ENCODE measurements at regions of chrX and their contacts with region 1.

Region 1: GRCh38 chrX:40058719-40059118 is 39.0 kb downstream of the BCOR start:
- DNase-seq: no peak
- ATAC-seq: no peak
- H3K4me3 ChIP-seq: no peak overlapping the region
- H3K4me3 Mint-ChIP-seq: no peak overlapping the region
- H3K27ac ChIP-seq: no peak overlapping the region
- H3K27ac Mint-ChIP-seq: no peak overlapping the region
- H3K4me1 ChIP-seq: peaks cover 32% of the 10 kb centered on the region
- H3K4me1 Mint-ChIP-seq: peaks cover 35% of the 10 kb centered on the region
- H3K27me3 ChIP-seq: no peaks in the 10 kb centered on the region
- H3K27me3 Mint-ChIP-seq: no peaks in the 10 kb centered on the region
- CTCF ChIP-seq: no peak

Region 2: DNA sequence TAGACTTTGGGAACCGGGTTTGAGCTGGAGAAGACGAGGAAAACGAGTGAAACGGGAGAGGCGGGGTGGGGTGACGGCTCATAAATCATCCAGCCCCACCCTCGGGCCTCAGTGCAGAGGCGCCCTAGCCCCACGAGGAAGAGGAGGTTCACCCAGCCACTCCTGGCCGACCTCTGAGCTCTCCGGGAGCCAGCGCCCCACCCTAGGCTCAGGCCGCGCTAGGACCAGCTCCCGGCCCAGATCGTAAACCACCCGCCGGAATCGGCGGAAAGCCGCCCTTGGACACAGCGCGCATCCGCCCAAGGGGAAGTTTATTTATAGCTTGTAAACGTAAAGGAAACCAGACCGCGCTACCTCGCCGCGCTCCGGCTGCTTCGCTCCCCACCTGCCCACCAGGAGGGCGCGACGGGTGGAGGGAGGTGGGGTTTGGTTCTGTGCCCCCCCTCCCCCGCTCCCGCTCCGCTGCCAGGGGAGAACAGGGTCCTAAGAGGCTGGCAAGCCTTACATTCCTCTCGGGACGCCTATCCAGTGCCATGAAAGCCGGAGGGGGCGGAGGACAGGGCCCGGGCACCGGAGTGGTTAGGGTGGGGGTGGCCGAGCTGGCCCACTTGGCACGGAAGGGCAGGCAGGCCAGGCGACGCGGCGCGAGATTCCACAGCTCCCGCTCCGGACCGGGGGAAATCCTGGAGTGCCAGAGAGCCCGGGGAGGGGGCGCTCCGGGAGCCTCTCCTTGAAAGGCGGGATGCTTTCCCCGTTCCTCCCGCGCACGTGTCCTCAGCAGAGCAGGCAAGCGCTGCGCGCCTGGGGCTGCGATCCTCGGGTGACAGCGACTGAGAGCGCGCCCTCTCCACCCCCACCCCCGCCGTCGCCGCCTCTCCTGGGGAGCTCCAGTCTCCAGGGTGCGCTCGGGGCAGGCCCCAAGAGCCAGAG is 45.2 kb before region 1 on chrX:
- CTCF ChIA-PET with region 1: no interaction called
- POLR2A ChIA-PET with region 1: no interaction called
- intact Hi-C with region 1: loop called (anchors 2 to 5 kb)
- DNase-seq: peak in 6 of 9 experiments; percentile 18 to 66 (median 46)
- ATAC-seq: peak; percentile 37
- H3K4me3 ChIP-seq: peak overlapping the region; percentile 54 to 57
- H3K4me3 Mint-ChIP-seq: peak overlapping the region; percentile 76
- H3K27ac ChIP-seq: no peak overlapping the region
- H3K27ac Mint-ChIP-seq: no peak overlapping the region
- H3K4me1 ChIP-seq: peaks cover 40% of the 10 kb centered on the region
- H3K4me1 Mint-ChIP-seq: peaks cover 27% of the 10 kb centered on the region
- H3K27me3 ChIP-seq: peaks cover 0 to 3% of the 10 kb centered on the region in 2 experiments
- H3K27me3 Mint-ChIP-seq: peaks cover 2% of the 10 kb centered on the region
- CTCF ChIP-seq: no peak

Region 3: DNA sequence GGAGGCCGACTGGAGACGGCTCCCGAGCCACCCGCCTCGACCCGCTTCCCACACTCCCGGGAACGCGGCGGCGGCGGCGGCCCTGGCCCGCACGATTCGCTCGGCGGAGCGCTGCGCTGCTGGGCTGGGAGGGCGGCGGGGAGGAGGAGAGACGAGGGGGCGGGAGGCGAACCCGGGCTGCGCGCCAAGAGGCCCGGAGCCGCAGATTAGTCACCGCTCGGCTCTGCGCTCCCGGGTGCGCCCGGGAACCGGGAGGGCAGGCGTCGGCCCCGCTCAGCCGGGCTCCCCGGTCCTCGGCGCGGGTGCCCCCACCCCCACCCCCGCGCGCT is 50.2 kb after region 1 on chrX:
- CTCF ChIA-PET with region 1: no interaction called
- POLR2A ChIA-PET with region 1: no interaction called
- intact Hi-C with region 1: no loop called
- DNase-seq: peak; percentile 26 to 85 (median 69)
- ATAC-seq: peak; percentile 57
- H3K4me3 ChIP-seq: peak overlapping the region; percentile 37 to 40
- H3K4me3 Mint-ChIP-seq: peak overlapping the region; percentile 64
- H3K27ac ChIP-seq: no peak overlapping the region
- H3K27ac Mint-ChIP-seq: no peak overlapping the region
- H3K4me1 ChIP-seq: peaks cover 15% of the 10 kb centered on the region
- H3K4me1 Mint-ChIP-seq: peaks cover 13% of the 10 kb centered on the region
- H3K27me3 ChIP-seq: no peaks in the 10 kb centered on the region
- H3K27me3 Mint-ChIP-seq: no peaks in the 10 kb centered on the region
- CTCF ChIP-seq: no peak

Region 4: DNA sequence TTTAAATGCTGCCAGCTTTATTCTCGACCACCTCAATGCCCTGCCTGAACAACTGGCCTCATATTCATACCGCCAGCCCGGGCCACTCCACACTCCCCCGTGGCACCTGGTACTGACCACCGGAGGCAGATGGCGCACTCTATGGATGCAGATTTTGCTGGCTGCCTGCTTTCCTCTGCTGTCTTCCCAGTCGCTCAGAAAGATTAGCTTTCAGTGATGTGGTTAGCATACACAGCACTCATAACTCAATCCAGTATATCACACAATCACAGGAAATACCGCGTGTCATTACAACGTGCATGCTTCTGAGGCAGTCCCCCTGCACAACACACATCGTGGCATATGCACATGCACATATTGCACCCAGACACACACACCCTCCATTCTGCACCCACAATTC is 186.3 kb after region 1 on chrX:
- CTCF ChIA-PET with region 1: no interaction called
- POLR2A ChIA-PET with region 1: no interaction called
- intact Hi-C with region 1: loop called in 1 of 2 experiments (anchors 5 kb)
- DNase-seq: peak in 2 of 9 experiments; percentile 8 to 35
- ATAC-seq: peak; percentile 56
- H3K4me3 ChIP-seq: no peak overlapping the region
- H3K4me3 Mint-ChIP-seq: peak overlapping the region; percentile 50
- H3K27ac ChIP-seq: no peak overlapping the region
- H3K27ac Mint-ChIP-seq: no peak overlapping the region
- H3K4me1 ChIP-seq: peaks cover 11% of the 10 kb centered on the region
- H3K4me1 Mint-ChIP-seq: peaks cover 9% of the 10 kb centered on the region
- H3K27me3 ChIP-seq: no peaks in the 10 kb centered on the region
- H3K27me3 Mint-ChIP-seq: no peaks in the 10 kb centered on the region
- CTCF ChIP-seq: no peak

Region 5: DNA sequence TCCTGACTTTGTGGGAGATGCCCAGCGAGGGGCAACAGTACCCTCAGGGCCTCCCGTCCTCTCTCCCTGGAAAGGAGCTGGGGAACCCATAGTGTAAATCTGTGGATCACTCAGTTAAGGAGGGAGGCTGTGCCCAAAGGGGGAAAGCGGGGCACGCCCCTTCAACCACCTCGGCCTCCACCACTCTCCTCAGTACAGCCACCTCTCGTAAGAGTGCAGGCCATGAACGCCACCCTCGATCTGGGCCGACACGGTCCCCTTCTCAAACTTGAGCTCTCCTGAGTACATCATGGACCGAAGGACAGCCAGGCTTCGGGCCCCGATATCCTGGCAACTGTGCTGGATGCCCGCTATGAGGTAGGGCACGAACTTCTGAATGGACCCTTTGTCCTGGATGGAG is 300.3 kb after region 1 on chrX:
- CTCF ChIA-PET with region 1: no interaction called
- POLR2A ChIA-PET with region 1: no interaction called
- intact Hi-C with region 1: no loop called
- DNase-seq: no peak
- ATAC-seq: no peak
- H3K4me3 ChIP-seq: no peak overlapping the region
- H3K4me3 Mint-ChIP-seq: no peak overlapping the region
- H3K27ac ChIP-seq: no peak overlapping the region
- H3K27ac Mint-ChIP-seq: no peak overlapping the region
- H3K4me1 ChIP-seq: no peaks in the 10 kb centered on the region
- H3K4me1 Mint-ChIP-seq: no peaks in the 10 kb centered on the region
- H3K27me3 ChIP-seq: no peaks in the 10 kb centered on the region
- H3K27me3 Mint-ChIP-seq: no peaks in the 10 kb centered on the region
- CTCF ChIP-seq: no peak